Activated CD4-positive, alpha-beta T cell treated with anti-CD3 and anti-CD28 coated beads, Interleukin-2, amount 10 ng/mL, durations not matched to agents 24 days and 14 days (primary cell): ENCODE measurements at regions of chr6 and their contacts with region 1.

Region 1: DNA sequence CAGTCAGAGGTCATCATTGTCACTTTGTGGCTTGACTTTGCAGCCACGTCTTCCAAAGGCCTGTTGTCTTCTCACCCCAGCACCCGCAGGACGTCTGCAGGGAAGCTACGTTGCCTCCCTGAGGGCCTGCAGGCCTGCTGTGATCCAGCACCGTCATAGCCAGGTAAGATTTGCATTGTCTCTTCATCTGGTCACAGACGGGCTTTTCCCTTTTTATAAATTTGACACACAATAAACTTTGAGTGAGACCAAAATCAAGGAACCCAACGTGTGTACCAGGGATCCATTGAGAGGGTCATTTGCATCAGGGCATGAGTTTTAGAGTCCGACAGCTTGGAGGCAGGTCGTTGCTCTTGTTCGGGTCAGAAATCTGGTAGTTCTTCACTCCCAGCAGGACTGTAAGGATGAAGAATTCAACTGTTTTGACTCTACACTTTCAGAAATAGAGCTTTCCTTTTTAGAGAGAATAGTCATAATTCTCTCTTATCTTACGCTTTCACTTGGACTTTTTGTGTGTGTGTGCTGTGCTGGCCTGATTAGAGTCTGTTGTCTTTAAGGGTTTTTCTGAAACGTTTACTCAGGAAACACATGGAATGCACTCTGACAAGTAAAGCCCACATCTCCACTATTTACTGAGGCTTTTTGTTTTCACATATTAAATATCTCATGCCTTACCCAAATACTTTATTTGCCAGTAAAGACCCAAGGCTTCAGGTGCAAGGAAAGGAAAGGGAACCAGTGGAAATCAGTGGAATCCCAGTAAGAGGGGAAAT is 177.2 kb upstream of the TAB2 start:
- DNase-seq: peak; percentile 87
- H3K4me3 Mint-ChIP-seq: peak overlapping the region; percentile 85
- H3K27ac Mint-ChIP-seq: peak overlapping the region; percentile 100
- H3K4me1 Mint-ChIP-seq: peaks cover 48% of the 10 kb centered on the region
- H3K27me3 Mint-ChIP-seq: no peaks in the 10 kb centered on the region

Region 2: GRCh38 chr6:149082286-149082707 is 58.0 kb before region 1 on chr6:
- intact Hi-C with region 1: loop called (anchors 2 kb)
- DNase-seq: peak; percentile 96
- H3K4me3 Mint-ChIP-seq: peak overlapping the region; percentile 69
- H3K27ac Mint-ChIP-seq: peak overlapping the region; percentile 92
- H3K4me1 Mint-ChIP-seq: peaks cover 76% of the 10 kb centered on the region
- H3K27me3 Mint-ChIP-seq: no peaks in the 10 kb centered on the region

Region 3: GRCh38 chr6:149122850-149123821 is 17.2 kb before region 1 on chr6:
- intact Hi-C with region 1: loop called (anchors 1 kb)
- DNase-seq: peak; percentile 56
- H3K4me3 Mint-ChIP-seq: peak overlapping the region; percentile 43
- H3K27ac Mint-ChIP-seq: peak overlapping the region; percentile 83
- H3K4me1 Mint-ChIP-seq: peaks cover 66% of the 10 kb centered on the region
- H3K27me3 Mint-ChIP-seq: no peaks in the 10 kb centered on the region

Region 4: GRCh38 chr6:149154261-149154821 is 14.0 kb after region 1 on chr6:
- intact Hi-C with region 1: loop called (anchors 2 kb)
- DNase-seq: peak; percentile 62
- H3K4me3 Mint-ChIP-seq: peak overlapping the region; percentile 71
- H3K27ac Mint-ChIP-seq: peak overlapping the region; percentile 94
- H3K4me1 Mint-ChIP-seq: peaks cover 69% of the 10 kb centered on the region
- H3K27me3 Mint-ChIP-seq: no peaks in the 10 kb centered on the region

Region 5: GRCh38 chr6:149271348-149272340 is 131.3 kb after region 1 on chr6:
- intact Hi-C with region 1: loop called (anchors 1 kb)
- DNase-seq: peak; percentile 74
- H3K4me3 Mint-ChIP-seq: peak overlapping the region; percentile 60
- H3K27ac Mint-ChIP-seq: peak overlapping the region; percentile 94
- H3K4me1 Mint-ChIP-seq: peaks cover 37% of the 10 kb centered on the region
- H3K27me3 Mint-ChIP-seq: no peaks in the 10 kb centered on the region

Region 6: GRCh38 chr6:149499066-149499465 is 358.7 kb after region 1 on chr6:
- intact Hi-C with region 1: loop called (anchors 5 kb)
- DNase-seq: peak; percentile 38
- H3K4me3 Mint-ChIP-seq: no peak overlapping the region
- H3K27ac Mint-ChIP-seq: peak overlapping the region; percentile 48
- H3K4me1 Mint-ChIP-seq: peaks cover 63% of the 10 kb centered on the region
- H3K27me3 Mint-ChIP-seq: no peaks in the 10 kb centered on the region